B cell (primary cell): ENCODE measurements at regions of chr14 and their contacts with region 1.

Region 1: DNA sequence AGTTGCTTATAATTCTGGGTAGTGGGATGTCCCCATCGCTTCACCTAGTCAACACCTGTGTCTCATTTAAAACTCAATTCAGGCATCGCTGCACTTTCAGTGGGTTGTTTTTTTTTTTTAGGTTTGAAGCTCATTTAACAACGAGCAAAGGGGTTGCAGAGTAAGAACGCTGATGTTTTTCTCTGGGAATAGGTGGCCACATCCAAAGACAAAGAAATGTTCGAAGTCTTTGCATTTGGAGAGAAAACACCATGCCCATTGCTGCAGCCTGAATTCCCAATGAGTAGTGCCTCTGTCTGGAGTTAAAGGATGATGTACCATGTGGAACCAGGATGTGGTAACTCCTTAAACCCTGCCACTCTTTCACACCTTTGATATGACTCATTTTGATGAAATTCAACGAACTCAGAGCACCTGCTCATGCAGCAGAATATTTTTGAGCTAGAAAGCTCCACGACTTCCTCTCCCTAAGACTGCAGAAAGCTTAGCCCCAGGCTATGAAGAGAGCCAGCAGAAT is 35.1 kb upstream of the BATF start:
- DNase-seq: no peak
- ATAC-seq: no peak
- H3K4me3 ChIP-seq: no peak overlapping the region
- H3K4me3 Mint-ChIP-seq: no peak overlapping the region
- H3K27ac ChIP-seq: no peak overlapping the region
- H3K27ac Mint-ChIP-seq: peak overlapping the region; percentile 8
- H3K4me1 ChIP-seq: peaks cover 0 to 8% of the 10 kb centered on the region in 2 donors
- H3K4me1 Mint-ChIP-seq: peaks cover 12% of the 10 kb centered on the region
- H3K27me3 ChIP-seq: peaks cover 0 to 11% (median 0%) of the 10 kb centered on the region in 4 experiments
- H3K27me3 Mint-ChIP-seq: no peaks in the 10 kb centered on the region
- CTCF ChIP-seq: no peak

Region 2: DNA sequence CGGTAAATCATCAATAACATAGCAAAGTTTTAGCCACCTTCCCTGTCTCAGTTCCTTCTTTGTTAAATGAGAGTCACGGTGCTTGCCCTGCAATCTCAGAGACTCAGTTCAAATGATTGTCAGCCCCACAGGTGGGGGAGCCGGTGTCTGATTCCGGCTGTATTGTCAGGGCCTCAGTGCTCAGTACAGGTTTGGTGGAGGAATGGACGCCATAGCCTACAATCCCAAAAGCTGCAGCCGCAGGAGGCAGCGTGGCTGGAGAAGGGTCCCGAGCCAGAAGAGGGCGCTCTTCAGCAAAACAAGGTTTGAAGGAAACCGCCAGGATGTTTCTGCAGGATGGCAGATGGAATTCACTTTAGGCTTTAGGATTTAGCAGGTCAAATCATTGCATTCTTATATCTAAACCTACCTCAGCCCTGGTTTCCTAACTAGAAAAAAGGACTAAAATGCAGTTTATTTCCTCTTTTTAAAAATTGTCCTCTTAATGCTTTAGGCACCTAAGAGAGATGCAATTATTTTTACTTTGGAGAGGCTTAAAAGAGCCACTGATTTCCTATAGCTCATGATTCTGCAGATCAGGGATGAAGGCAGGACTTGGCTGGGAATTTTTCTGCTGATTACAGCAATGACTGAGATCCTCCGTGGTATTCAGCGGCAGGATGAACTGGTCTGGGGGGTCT is 179.4 kb before region 1 on chr14:
- CTCF ChIA-PET with region 1: interaction called, 221 read pairs
- POLR2A ChIA-PET with region 1: interaction called, 4 read pairs
- intact Hi-C with region 1: loop called (anchors 1 kb)
- DNase-seq: peak; percentile 79
- ATAC-seq: peak; percentile 59
- H3K4me3 ChIP-seq: no peak overlapping the region
- H3K4me3 Mint-ChIP-seq: peak overlapping the region; percentile 13
- H3K27ac ChIP-seq: no peak overlapping the region
- H3K27ac Mint-ChIP-seq: no peak overlapping the region
- H3K4me1 ChIP-seq: peaks cover 3 to 18% of the 10 kb centered on the region in 2 donors
- H3K4me1 Mint-ChIP-seq: peaks cover 15% of the 10 kb centered on the region
- H3K27me3 ChIP-seq: no peaks in the 10 kb centered on the region
- H3K27me3 Mint-ChIP-seq: no peaks in the 10 kb centered on the region
- CTCF ChIP-seq: peak; percentile 80

Region 3: GRCh38 chr14:75452900-75453747 is 34.1 kb before region 1 on chr14:
- CTCF ChIA-PET with region 1: interaction called, 15 read pairs
- POLR2A ChIA-PET with region 1: no interaction called
- intact Hi-C with region 1: no loop called
- DNase-seq: no peak
- ATAC-seq: no peak
- H3K4me3 ChIP-seq: no peak overlapping the region
- H3K4me3 Mint-ChIP-seq: no peak overlapping the region
- H3K27ac ChIP-seq: no peak overlapping the region
- H3K27ac Mint-ChIP-seq: no peak overlapping the region
- H3K4me1 ChIP-seq: peaks cover 0 to 9% of the 10 kb centered on the region in 2 donors
- H3K4me1 Mint-ChIP-seq: peaks cover 8% of the 10 kb centered on the region
- H3K27me3 ChIP-seq: no peaks in the 10 kb centered on the region
- H3K27me3 Mint-ChIP-seq: no peaks in the 10 kb centered on the region
- CTCF ChIP-seq: no peak

Region 4: GRCh38 chr14:75514673-75515628 is 27.7 kb after region 1 on chr14:
- CTCF ChIA-PET with region 1: interaction called, 25 read pairs
- POLR2A ChIA-PET with region 1: no interaction called
- intact Hi-C with region 1: loop called (anchors 2 kb)
- DNase-seq: peak; percentile 78
- ATAC-seq: peak; percentile 54
- H3K4me3 ChIP-seq: peak overlapping the region; percentile 29 to 62 (median 45)
- H3K4me3 Mint-ChIP-seq: peak overlapping the region; percentile 91
- H3K27ac ChIP-seq: peak overlapping the region; percentile 15 to 55
- H3K27ac Mint-ChIP-seq: peak overlapping the region; percentile 95
- H3K4me1 ChIP-seq: peaks cover 29 to 36% of the 10 kb centered on the region in 2 donors
- H3K4me1 Mint-ChIP-seq: peaks cover 47% of the 10 kb centered on the region
- H3K27me3 ChIP-seq: no peaks in the 10 kb centered on the region
- H3K27me3 Mint-ChIP-seq: no peaks in the 10 kb centered on the region
- CTCF ChIP-seq: peak; percentile 74